Panc1 (cell line): ENCODE measurements at regions of chr5 and their contacts with region 1.

Region 1: GRCh38 chr5:55187370-55187769 is 14.4 kb upstream of the CDC20B start:
- DNase-seq: no peak
- ATAC-seq: peak; percentile 89
- H3K4me3 ChIP-seq: no peak overlapping the region
- H3K27ac ChIP-seq: no peak overlapping the region
- H3K4me1 ChIP-seq: peaks cover 4% of the 10 kb centered on the region
- H3K27me3 ChIP-seq: peaks cover 7% of the 10 kb centered on the region; the same call in 1 of the 2 replicates
- CTCF ChIP-seq: peak; percentile 71

Region 2: GRCh38 chr5:55172051-55172899 is 15.1 kb before region 1 on chr5:
- CTCF ChIA-PET with region 1: interaction called, 19 read pairs
- POLR2A ChIA-PET with region 1: interaction called, 5 read pairs
- in situ Hi-C with region 1: no loop called
- intact Hi-C with region 1: no loop called
- DNase-seq: peak; percentile 65
- ATAC-seq: peak; percentile 62
- H3K4me3 ChIP-seq: peak overlapping the region; percentile 48 to 83
- H3K27ac ChIP-seq: no peak overlapping the region
- H3K4me1 ChIP-seq: peaks cover 23% of the 10 kb centered on the region
- H3K27me3 ChIP-seq: no peaks in the 10 kb centered on the region
- CTCF ChIP-seq: peak; percentile 83

Region 3: DNA sequence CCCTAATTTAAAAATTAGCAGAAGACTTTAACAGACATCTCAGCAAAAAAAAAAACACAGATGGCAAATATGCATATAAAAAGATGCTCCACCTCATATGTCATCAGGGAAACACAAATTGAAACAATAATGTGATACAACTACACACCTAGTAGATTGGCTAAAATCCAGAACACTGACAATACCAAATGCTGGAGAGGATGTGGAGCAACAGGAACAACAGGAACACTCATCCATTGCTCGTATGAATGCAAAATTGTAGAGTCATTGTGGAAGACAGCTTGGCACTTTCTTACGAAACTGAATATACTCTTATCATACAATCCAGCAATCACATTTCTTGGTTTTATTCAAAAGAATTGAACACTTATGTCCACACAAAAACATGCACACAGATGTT is 17.6 kb after region 1 on chr5:
- CTCF ChIA-PET with region 1: no interaction called
- POLR2A ChIA-PET with region 1: interaction called, 10 read pairs
- in situ Hi-C with region 1: no loop called
- intact Hi-C with region 1: no loop called
- DNase-seq: no peak
- ATAC-seq: no peak
- H3K4me3 ChIP-seq: no peak overlapping the region
- H3K27ac ChIP-seq: no peak overlapping the region
- H3K4me1 ChIP-seq: no peaks in the 10 kb centered on the region
- H3K27me3 ChIP-seq: no peaks in the 10 kb centered on the region; the same call in 1 of the 2 replicates
- CTCF ChIP-seq: no peak

Region 4: GRCh38 chr5:55232985-55233928 is 45.9 kb after region 1 on chr5 and contains the start of gene CCNO:
- CTCF ChIA-PET with region 1: interaction called, 16 read pairs
- POLR2A ChIA-PET with region 1: no interaction called
- in situ Hi-C with region 1: no loop called
- intact Hi-C with region 1: no loop called
- DNase-seq: no peak
- ATAC-seq: peak; percentile 91
- H3K4me3 ChIP-seq: peak within 1 kb of the TSS; percentile 60 to 89
- H3K27ac ChIP-seq: peak within 1 kb of the TSS; percentile 72
- H3K4me1 ChIP-seq: peaks cover 12% of the 10 kb centered on the region
- H3K27me3 ChIP-seq: peaks cover 3% of the 10 kb centered on the region; the same call in 1 of the 2 replicates
- CTCF ChIP-seq: no peak
- total RNA-seq, gene CCNO: 12.3 TPM

Region 5: GRCh38 chr5:55300890-55301289 is 113.5 kb after region 1 on chr5:
- CTCF ChIA-PET with region 1: no interaction called
- POLR2A ChIA-PET with region 1: no interaction called
- in situ Hi-C with region 1: no loop called
- intact Hi-C with region 1: no loop called
- DNase-seq: no peak
- ATAC-seq: no peak
- H3K4me3 ChIP-seq: no peak overlapping the region
- H3K27ac ChIP-seq: no peak overlapping the region
- H3K4me1 ChIP-seq: peaks cover 12% of the 10 kb centered on the region
- H3K27me3 ChIP-seq: no peaks in the 10 kb centered on the region
- CTCF ChIP-seq: no peak

Region 6: GRCh38 chr5:55421074-55421529 is 233.7 kb after region 1 on chr5:
- CTCF ChIA-PET with region 1: no interaction called
- POLR2A ChIA-PET with region 1: no interaction called
- in situ Hi-C with region 1: no loop called
- intact Hi-C with region 1: no loop called
- DNase-seq: no peak
- ATAC-seq: no peak
- H3K4me3 ChIP-seq: no peak overlapping the region
- H3K27ac ChIP-seq: no peak overlapping the region
- H3K4me1 ChIP-seq: no peaks in the 10 kb centered on the region
- H3K27me3 ChIP-seq: no peaks in the 10 kb centered on the region
- CTCF ChIP-seq: no peak